Prostate gland (tissue), 2 donors: ENCODE measurements at regions of chr9 and their contacts with region 1.

Region 1: DNA sequence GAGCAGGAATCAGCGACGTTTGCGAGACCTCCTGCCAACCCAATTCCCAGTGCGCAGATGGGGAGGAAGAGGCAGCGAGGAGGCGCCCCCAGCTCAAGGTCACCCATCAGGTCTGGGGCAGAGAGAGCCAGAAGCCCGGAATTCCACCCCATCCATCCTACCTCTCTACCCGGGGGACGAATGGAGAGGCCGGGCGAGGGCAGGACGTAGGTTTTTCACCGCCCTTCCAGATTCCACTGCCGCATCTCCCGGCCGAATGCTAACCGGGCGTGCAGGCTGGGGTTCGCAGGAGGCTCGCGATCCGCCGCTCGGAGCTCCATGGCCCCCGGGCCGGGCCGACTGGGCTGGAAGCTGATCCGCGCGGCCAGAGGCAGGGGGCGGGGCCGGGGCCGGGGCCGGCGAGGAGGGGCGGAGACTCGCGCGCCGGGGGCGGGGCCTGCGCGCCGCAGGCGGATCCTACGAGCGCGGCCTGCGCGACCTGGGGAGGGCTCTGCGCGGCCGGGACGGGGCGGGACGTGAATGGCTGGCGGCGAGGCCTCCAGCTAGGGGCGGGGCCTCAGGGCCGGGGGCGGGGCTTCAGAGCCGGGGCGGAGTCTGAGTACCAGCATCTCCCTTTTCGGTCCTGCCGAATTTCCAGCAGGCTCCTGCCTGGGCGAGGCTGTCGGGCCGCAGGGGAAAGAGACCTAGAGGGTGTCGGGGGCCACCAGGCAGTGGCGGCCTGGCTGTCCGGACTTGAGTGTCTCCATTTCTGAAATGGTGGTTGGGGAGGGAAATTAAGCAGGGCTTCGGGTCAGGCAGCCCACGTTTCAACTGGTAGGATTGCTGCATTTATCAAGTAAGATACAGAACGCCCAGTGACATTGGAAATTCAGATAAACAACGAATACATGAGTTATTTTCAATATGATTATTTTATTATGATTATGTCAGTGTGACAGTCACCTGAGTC is at the start of gene ST6GALNAC4:
- DNase-seq: peak; percentile 85
- H3K4me3 ChIP-seq: peak within 1 kb of the TSS; percentile 39 to 42
- H3K27ac ChIP-seq: peak within 1 kb of the TSS; percentile 58 to 66
- H3K4me1 ChIP-seq: no peaks in the 10 kb centered on the region
- H3K27me3 ChIP-seq: no peaks in the 10 kb centered on the region
- CTCF ChIP-seq: no peak
- POLR2A ChIP-seq: peak; percentile 74
- total RNA-seq, gene ST6GALNAC4: 21.8 to 47.0 TPM

Region 2: GRCh38 chr9:127503947-127504782 is 412.8 kb before region 1 on chr9:
- intact Hi-C with region 1: loop called (anchors 10 kb)
- DNase-seq: peak; percentile 88
- H3K4me3 ChIP-seq: no peak overlapping the region
- H3K27ac ChIP-seq: peak overlapping the region; percentile 55 to 67
- H3K4me1 ChIP-seq: peaks cover 8% of the 10 kb centered on the region
- H3K27me3 ChIP-seq: no peaks in the 10 kb centered on the region
- CTCF ChIP-seq: peak; percentile 81 to 96 (median 90)
- POLR2A ChIP-seq: no peak

Region 3: GRCh38 chr9:127586537-127586936 is 330.4 kb before region 1 on chr9:
- intact Hi-C with region 1: loop called (anchors 2 kb)
- DNase-seq: peak; percentile 88
- H3K4me3 ChIP-seq: no peak overlapping the region
- H3K27ac ChIP-seq: no peak overlapping the region
- H3K4me1 ChIP-seq: peaks cover 6% of the 10 kb centered on the region
- H3K27me3 ChIP-seq: no peaks in the 10 kb centered on the region
- CTCF ChIP-seq: peak; percentile 88 to 97 (median 92)
- POLR2A ChIP-seq: no peak

Region 4: GRCh38 chr9:127611899-127612790 is 304.8 kb before region 1 on chr9 and contains the start of gene STXBP1:
- intact Hi-C with region 1: loop called (anchors 5 kb)
- DNase-seq: peak; percentile 89
- H3K4me3 ChIP-seq: peak within 1 kb of the TSS; percentile 81 to 98
- H3K27ac ChIP-seq: peak within 1 kb of the TSS; percentile 86 to 89
- H3K4me1 ChIP-seq: no peaks in the 10 kb centered on the region
- H3K27me3 ChIP-seq: no peaks in the 10 kb centered on the region
- CTCF ChIP-seq: peak in 2 of 4 experiments; percentile 35 to 37
- POLR2A ChIP-seq: peak; percentile 79
- total RNA-seq, gene STXBP1: 32.2 to 47.6 TPM

Region 5: DNA sequence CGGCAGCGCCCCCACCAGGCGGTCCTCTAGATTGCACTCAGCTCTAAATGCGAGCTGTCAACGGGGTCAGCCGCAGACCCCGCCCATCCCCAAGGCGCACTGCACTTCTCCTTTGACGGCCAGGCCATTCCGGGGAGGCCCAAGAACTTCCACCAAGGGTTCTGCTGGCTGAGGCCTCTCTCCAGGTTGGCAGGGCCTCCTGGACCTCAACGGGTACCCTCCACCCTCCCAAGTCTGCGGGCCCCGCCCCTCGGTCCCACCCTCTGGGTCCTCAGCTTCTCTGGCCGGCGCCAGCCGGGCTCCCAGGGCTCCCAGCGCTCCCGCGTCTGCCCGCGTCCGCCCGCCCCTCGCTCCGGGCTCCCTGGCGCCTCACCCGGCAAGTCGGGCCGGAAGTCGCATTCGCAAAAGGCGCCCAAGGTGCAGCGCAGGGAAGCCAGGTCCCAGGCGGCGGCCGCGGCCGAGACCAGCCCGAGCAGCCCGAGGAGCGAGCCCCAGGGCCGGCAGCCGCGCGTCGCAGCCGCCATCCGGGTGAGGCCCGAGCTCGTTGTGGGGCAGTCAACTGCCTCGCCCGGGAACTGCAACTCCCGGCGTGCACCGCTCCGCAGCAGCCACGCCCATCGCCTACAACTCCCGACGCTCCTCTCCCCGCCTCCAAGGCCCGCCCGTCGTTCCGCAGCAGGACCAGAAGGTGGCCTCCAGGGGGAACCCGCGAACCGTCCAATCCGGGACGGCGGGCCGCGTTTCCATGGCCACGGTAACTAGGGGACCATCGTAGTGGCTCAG is 182.0 kb before region 1 on chr9 and contains the start of gene TOR2A:
- intact Hi-C with region 1: loop called (anchors 2 kb)
- DNase-seq: peak; percentile 96
- H3K4me3 ChIP-seq: peak within 1 kb of the TSS; percentile 45 to 55
- H3K27ac ChIP-seq: peak within 1 kb of the TSS; percentile 83 to 89
- H3K4me1 ChIP-seq: no peaks in the 10 kb centered on the region
- H3K27me3 ChIP-seq: no peaks in the 10 kb centered on the region
- CTCF ChIP-seq: peak; percentile 89 to 100 (median 98)
- POLR2A ChIP-seq: peak; percentile 90
- total RNA-seq, gene TOR2A: 20.4 to 24.1 TPM

Region 6: GRCh38 chr9:127785023-127785932 is 131.7 kb before region 1 on chr9:
- intact Hi-C with region 1: loop called (anchors 5 kb)
- DNase-seq: peak; percentile 82
- H3K4me3 ChIP-seq: peak overlapping the region; percentile 95 to 96
- H3K27ac ChIP-seq: peak overlapping the region; percentile 93 to 96
- H3K4me1 ChIP-seq: peaks cover 8% of the 10 kb centered on the region
- H3K27me3 ChIP-seq: no peaks in the 10 kb centered on the region
- CTCF ChIP-seq: peak; percentile 92 to 99 (median 96)
- POLR2A ChIP-seq: no peak

Region 7: GRCh38 chr9:127802576-127803443 is 114.1 kb before region 1 on chr9 and contains the start of gene FPGS:
- intact Hi-C with region 1: loop called (anchors 5 kb)
- DNase-seq: peak; percentile 79
- H3K4me3 ChIP-seq: peak within 1 kb of the TSS; percentile 63
- H3K27ac ChIP-seq: peak within 1 kb of the TSS; percentile 92 to 93
- H3K4me1 ChIP-seq: peaks cover 16% of the 10 kb centered on the region
- H3K27me3 ChIP-seq: no peaks in the 10 kb centered on the region
- CTCF ChIP-seq: peak in 1 of 4 experiments; percentile 21
- POLR2A ChIP-seq: peak; percentile 66
- total RNA-seq, gene FPGS: 117 TPM